ENCODE measurements at regions of chr12 and their contacts with region 1.

Region 1: GRCh38 chr12:49188914-49189367 is at the start of gene TUBA1A:
- DNase-seq: peak; percentile 53 to 73 (median 65)
- ATAC-seq: peak; percentile 82
- H3K4me3 ChIP-seq: peak within 1 kb of the TSS; percentile 86
- H3K27ac ChIP-seq: peak within 1 kb of the TSS; percentile 37; the same call in 2 of the 3 replicates
- H3K4me1 ChIP-seq: peaks cover 3 to 16% of the 10 kb centered on the region in 2 experiments
- H3K27me3 ChIP-seq: no peaks in the 10 kb centered on the region
- CTCF ChIP-seq: peak in 1 of 3 experiments; percentile 20; a peak in 1 of 6 replicates
- EP300 ChIP-seq: no peak
- POLR2A ChIP-seq: no peak
- RAD21 ChIP-seq: no peak
- polyA plus RNA-seq, gene TUBA1A: 23.7 to 24.2 TPM

Region 2: GRCh38 chr12:48903982-48904411 is 284.9 kb before region 1 on chr12:
- CTCF ChIA-PET with region 1: no interaction called
- POLR2A ChIA-PET with region 1: no interaction called
- in situ Hi-C with region 1: no loop called
- intact Hi-C with region 1: no loop called
- DNase-seq: peak; percentile 79 to 87 (median 80)
- ATAC-seq: peak; percentile 98
- H3K4me3 ChIP-seq: peak overlapping the region; percentile 27; the same call in 1 of the 2 replicates
- H3K27ac ChIP-seq: no peak overlapping the region
- H3K4me1 ChIP-seq: no peaks in the 10 kb centered on the region; a peak in 1 of 5 replicates
- H3K27me3 ChIP-seq: peaks cover 0 to 15% of the 10 kb centered on the region in 2 experiments; a peak in 3 of 5 replicates
- CTCF ChIP-seq: peak; percentile 72 to 86 (median 73)
- EP300 ChIP-seq: no peak
- POLR2A ChIP-seq: no peak
- RAD21 ChIP-seq: no peak

Region 3: DNA sequence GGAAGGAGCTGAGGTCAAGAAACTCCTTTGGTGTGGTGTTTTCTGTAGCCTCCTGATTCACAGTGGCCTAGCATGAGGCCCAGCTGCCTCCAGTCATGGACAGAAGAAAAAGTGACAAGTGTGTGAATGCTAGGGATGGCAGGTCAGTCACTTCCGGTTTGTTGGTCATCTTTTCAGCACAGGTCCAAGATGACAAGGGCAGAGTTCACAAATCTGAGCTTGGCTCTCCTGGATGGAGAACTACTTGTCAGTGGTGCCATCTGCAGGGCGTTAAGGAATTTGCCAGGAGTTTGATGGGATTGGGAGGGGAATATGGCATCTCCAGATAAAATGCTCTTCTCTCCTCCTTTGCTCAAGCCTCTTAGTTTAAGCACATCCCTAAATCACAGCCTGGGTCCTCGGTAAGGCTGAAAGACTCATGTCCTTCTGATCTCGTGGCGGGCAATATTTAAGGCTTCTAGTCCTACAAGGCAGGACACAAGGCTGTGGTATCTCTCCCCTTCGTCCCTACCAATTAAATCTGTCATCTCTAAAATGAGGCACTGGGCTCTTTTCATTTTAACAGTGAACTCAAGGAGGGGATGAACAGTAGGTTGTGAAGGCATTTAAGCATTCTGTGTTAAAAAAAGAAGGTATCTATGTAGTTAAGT is 67.8 kb before region 1 on chr12:
- CTCF ChIA-PET with region 1: no interaction called
- POLR2A ChIA-PET with region 1: no interaction called
- in situ Hi-C with region 1: no loop called
- intact Hi-C with region 1: no loop called
- DNase-seq: peak; percentile 31 to 65 (median 41)
- ATAC-seq: peak; percentile 75
- H3K4me3 ChIP-seq: no peak overlapping the region
- H3K27ac ChIP-seq: no peak overlapping the region
- H3K4me1 ChIP-seq: no peaks in the 10 kb centered on the region; a peak in 2 of 5 replicates
- H3K27me3 ChIP-seq: no peaks in the 10 kb centered on the region
- CTCF ChIP-seq: peak; percentile 58 to 66 (median 63)
- EP300 ChIP-seq: no peak
- POLR2A ChIP-seq: no peak
- RAD21 ChIP-seq: peak in 1 of 2 experiments; percentile 78; a peak in 3 of 4 replicates

Region 4: GRCh38 chr12:49161092-49161795 is 27.7 kb before region 1 on chr12:
- CTCF ChIA-PET with region 1: no interaction called
- POLR2A ChIA-PET with region 1: no interaction called
- in situ Hi-C with region 1: no loop called
- intact Hi-C with region 1: loop called (anchors 2 kb)
- DNase-seq: peak in 1 of 4 experiments; percentile 7
- ATAC-seq: no peak; the same call in 2 of the 3 replicates
- H3K4me3 ChIP-seq: no peak overlapping the region
- H3K27ac ChIP-seq: no peak overlapping the region
- H3K4me1 ChIP-seq: peaks cover 5 to 6% of the 10 kb centered on the region in 2 experiments; a peak in 3 of 5 replicates
- H3K27me3 ChIP-seq: no peaks in the 10 kb centered on the region
- CTCF ChIP-seq: no peak
- EP300 ChIP-seq: no peak
- POLR2A ChIP-seq: peak; percentile 88
- RAD21 ChIP-seq: no peak

Region 5: GRCh38 chr12:49358483-49359141 is 169.7 kb after region 1 on chr12:
- CTCF ChIA-PET with region 1: no interaction called
- POLR2A ChIA-PET with region 1: no interaction called
- in situ Hi-C with region 1: no loop called
- intact Hi-C with region 1: no loop called
- DNase-seq: peak; percentile 69 to 86 (median 72)
- ATAC-seq: peak; percentile 96
- H3K4me3 ChIP-seq: no peak overlapping the region
- H3K27ac ChIP-seq: no peak overlapping the region
- H3K4me1 ChIP-seq: no peaks in the 10 kb centered on the region
- H3K27me3 ChIP-seq: no peaks in the 10 kb centered on the region
- CTCF ChIP-seq: peak; percentile 80 to 94 (median 90)
- EP300 ChIP-seq: no peak
- POLR2A ChIP-seq: no peak
- RAD21 ChIP-seq: peak; percentile 98

Region 6: GRCh38 chr12:49375406-49375805 is 186.5 kb after region 1 on chr12:
- CTCF ChIA-PET with region 1: no interaction called
- POLR2A ChIA-PET with region 1: no interaction called
- in situ Hi-C with region 1: no loop called
- intact Hi-C with region 1: no loop called
- DNase-seq: no peak
- ATAC-seq: no peak
- H3K4me3 ChIP-seq: no peak overlapping the region
- H3K27ac ChIP-seq: no peak overlapping the region
- H3K4me1 ChIP-seq: peaks cover 0 to 2% of the 10 kb centered on the region in 2 experiments; a peak in 3 of 5 replicates
- H3K27me3 ChIP-seq: no peaks in the 10 kb centered on the region
- CTCF ChIP-seq: no peak
- EP300 ChIP-seq: no peak
- POLR2A ChIP-seq: no peak
- RAD21 ChIP-seq: no peak